ENCODE measurements at regions of chr12 and their contacts with region 1.

Region 1: GRCh38 chr12:113241191-113242025 is 20.1 kb downstream of the TPCN1 start:
- DNase-seq: peak; percentile 75
- H3K4me3 Mint-ChIP-seq: peak overlapping the region; percentile 66
- H3K27ac Mint-ChIP-seq: peak overlapping the region; percentile 92
- H3K4me1 Mint-ChIP-seq: peaks cover 98% of the 10 kb centered on the region
- H3K27me3 Mint-ChIP-seq: no peaks in the 10 kb centered on the region
- CTCF ChIP-seq: no peak

Region 2: DNA sequence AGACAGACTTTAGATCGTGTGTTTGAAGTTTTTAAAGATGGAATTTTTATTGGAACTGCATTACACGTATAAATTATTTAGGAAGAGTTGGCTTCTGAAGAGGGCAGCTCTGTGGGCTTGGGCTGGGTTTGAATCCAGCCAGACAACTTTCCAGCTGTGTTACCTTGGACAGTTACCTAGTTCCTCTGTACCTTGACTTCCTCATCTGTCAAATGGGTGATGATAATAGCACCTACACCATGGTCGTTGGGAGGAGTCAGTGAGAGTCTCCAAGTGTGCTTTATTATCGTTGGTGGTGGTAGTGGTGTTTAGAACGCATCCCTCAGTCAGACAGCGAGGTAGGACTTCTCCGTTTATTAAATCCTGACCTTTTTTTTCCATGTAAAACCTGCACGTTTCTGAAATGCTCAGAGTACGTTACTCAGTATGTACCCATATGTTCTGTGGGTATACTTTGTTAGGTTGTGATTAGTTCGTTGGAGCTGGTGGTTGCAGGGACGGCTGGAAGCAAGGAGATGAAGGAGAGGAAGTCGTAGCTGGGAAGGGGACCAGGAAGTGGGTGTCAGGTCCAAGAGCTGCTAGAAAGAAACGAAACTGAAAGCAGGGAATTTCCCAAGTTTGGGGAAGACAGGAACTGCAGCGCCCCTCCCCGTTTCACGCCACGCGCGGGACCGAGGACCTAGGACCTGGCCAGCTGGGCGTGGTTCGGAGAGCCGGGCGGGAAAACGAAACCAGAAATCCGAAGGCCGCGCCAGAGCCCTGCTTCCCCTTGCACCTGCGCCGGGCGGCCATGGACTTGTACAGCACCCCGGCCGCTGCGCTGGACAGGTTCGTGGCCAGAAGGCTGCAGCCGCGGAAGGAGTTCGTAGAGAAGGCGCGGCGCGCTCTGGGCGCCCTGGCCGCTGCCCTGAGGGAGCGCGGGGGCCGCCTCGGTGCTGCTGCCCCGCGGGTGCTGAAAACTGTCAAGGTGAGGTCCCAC is 303.4 kb before region 1 on chr12 and contains the start of gene OAS3:
- CTCF ChIA-PET with region 1: no interaction called
- intact Hi-C with region 1: no loop called
- DNase-seq: peak; percentile 92
- H3K4me3 Mint-ChIP-seq: peak within 1 kb of the TSS; percentile 96
- H3K27ac Mint-ChIP-seq: peak within 1 kb of the TSS; percentile 91
- H3K4me1 Mint-ChIP-seq: peaks cover 38% of the 10 kb centered on the region
- H3K27me3 Mint-ChIP-seq: no peaks in the 10 kb centered on the region
- CTCF ChIP-seq: no peak
- total RNA-seq, gene OAS3: 159 and 326 TPM in 2 replicates

Region 3: DNA sequence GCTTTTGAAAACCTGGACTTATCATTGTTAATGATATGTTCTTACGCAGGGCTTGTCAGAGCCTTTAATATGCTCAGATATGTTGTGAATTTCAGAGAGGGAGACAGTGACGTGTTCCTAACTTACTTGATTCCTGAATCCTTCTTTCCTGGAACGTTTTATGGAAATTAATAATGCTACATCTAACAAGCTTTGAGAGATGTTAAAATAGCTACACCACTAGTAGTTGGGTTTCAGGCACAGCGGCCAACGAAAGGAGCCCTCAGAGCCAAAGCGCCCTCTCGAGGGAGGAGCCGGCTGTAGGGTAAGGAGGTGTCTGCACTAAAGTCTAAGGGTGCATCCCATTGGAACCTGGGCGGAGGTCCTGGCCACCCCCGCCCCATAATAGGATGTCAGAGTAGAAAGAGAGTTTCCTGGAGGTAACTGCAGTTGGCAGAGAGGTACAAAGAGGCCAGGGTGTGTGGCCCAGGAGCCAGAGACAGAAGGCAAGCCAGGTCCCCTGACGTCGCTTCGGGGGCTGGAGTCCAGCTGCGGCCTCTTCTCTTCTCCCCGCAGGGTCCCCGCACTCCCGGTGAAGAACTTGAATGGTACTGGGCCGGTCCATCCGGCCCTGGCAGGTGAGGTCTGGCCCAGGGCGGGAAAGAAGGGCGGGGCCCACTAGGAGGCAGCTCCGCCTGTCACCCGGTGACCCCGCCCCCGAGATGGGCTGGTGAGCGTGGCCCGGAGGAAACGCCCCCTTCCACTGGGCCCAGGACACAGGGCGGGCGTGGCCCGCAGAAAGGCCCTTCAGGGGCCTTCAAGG is 148.6 kb before region 1 on chr12:
- CTCF ChIA-PET with region 1: no interaction called
- intact Hi-C with region 1: no loop called
- DNase-seq: peak; percentile 75
- H3K4me3 Mint-ChIP-seq: peak overlapping the region; percentile 27
- H3K27ac Mint-ChIP-seq: no peak overlapping the region
- H3K4me1 Mint-ChIP-seq: peaks cover 8% of the 10 kb centered on the region
- H3K27me3 Mint-ChIP-seq: peaks cover 35% of the 10 kb centered on the region
- CTCF ChIP-seq: peak; percentile 11

Region 4: GRCh38 chr12:113136128-113136910 is 105.1 kb before region 1 on chr12:
- CTCF ChIA-PET with region 1: no interaction called
- intact Hi-C with region 1: no loop called
- DNase-seq: peak; percentile 69
- H3K4me3 Mint-ChIP-seq: peak overlapping the region; percentile 97
- H3K27ac Mint-ChIP-seq: peak overlapping the region; percentile 96
- H3K4me1 Mint-ChIP-seq: peaks cover 47% of the 10 kb centered on the region
- H3K27me3 Mint-ChIP-seq: no peaks in the 10 kb centered on the region
- CTCF ChIP-seq: no peak

Region 5: GRCh38 chr12:113222730-113223531 is 18.5 kb before region 1 on chr12:
- CTCF ChIA-PET with region 1: interaction called, 8 read pairs
- intact Hi-C with region 1: loop called (anchors 2 kb)
- DNase-seq: peak; percentile 64
- H3K4me3 Mint-ChIP-seq: peak overlapping the region; percentile 85
- H3K27ac Mint-ChIP-seq: peak overlapping the region; percentile 98
- H3K4me1 Mint-ChIP-seq: peaks cover 7% of the 10 kb centered on the region
- H3K27me3 Mint-ChIP-seq: no peaks in the 10 kb centered on the region
- CTCF ChIP-seq: no peak

Region 6: GRCh38 chr12:113299619-113300237 is 58.3 kb after region 1 on chr12:
- CTCF ChIA-PET with region 1: no interaction called
- intact Hi-C with region 1: loop called (anchors 5 kb)
- DNase-seq: peak; percentile 87
- H3K4me3 Mint-ChIP-seq: peak overlapping the region; percentile 15
- H3K27ac Mint-ChIP-seq: peak overlapping the region; percentile 56
- H3K4me1 Mint-ChIP-seq: peaks cover 11% of the 10 kb centered on the region
- H3K27me3 Mint-ChIP-seq: no peaks in the 10 kb centered on the region
- CTCF ChIP-seq: no peak

Measured in Calu3 (cell line).